ENCODE measurements at regions of chr21 and their contacts with region 1.

Region 1: GRCh38 chr21:26732432-26733221 is 112.6 kb downstream of the ADAMTS1 start:
- DNase-seq: peak; percentile 66
- ATAC-seq: peak; percentile 79
- H3K4me3 Mint-ChIP-seq: no peak overlapping the region
- H3K27ac Mint-ChIP-seq: no peak overlapping the region
- H3K4me1 Mint-ChIP-seq: peaks cover 38% of the 10 kb centered on the region
- H3K27me3 Mint-ChIP-seq: peaks cover 4% of the 10 kb centered on the region; the same call in 1 of the 2 replicates
- CTCF ChIP-seq: peak; percentile 20; the same call in 1 of the 2 replicates

Region 2: GRCh38 chr21:26320596-26320995 is 412.0 kb before region 1 on chr21:
- CTCF ChIA-PET with region 1: no interaction called
- POLR2A ChIA-PET with region 1: no interaction called
- DNase-seq: no peak
- ATAC-seq: no peak
- H3K4me3 Mint-ChIP-seq: no peak overlapping the region
- H3K27ac Mint-ChIP-seq: no peak overlapping the region
- H3K4me1 Mint-ChIP-seq: no peaks in the 10 kb centered on the region
- H3K27me3 Mint-ChIP-seq: no peaks in the 10 kb centered on the region
- CTCF ChIP-seq: no peak

Region 3: DNA sequence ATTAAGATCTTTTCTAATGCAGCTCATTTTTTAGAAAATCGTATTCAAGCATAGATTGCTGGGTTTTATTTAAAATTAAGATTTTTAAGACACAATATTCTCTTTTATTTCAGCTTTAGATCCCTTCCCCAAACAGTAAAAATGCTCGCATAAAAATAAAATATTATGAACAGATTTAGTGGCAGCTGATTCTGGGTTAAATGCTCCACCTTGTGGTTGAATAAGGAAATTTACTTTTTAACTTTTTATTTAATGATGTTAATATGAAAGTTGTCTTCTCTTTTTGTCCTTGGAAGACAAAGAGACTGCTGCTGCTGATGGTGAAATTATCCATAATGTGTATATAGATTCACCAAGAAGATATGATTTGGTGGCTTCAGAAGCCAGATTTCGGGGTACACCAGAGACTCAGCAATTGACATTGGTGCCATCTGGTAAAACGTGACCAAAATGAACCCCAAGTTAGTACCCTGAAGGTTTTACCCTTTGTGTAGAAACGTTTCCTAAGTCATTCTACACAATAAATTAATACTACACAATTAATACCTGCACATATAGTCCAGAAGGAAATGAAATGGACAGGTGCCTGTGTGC is 15.4 kb before region 1 on chr21:
- CTCF ChIA-PET with region 1: interaction called, 10 read pairs
- POLR2A ChIA-PET with region 1: interaction called, 3 read pairs
- DNase-seq: no peak
- ATAC-seq: no peak
- H3K4me3 Mint-ChIP-seq: no peak overlapping the region
- H3K27ac Mint-ChIP-seq: no peak overlapping the region
- H3K4me1 Mint-ChIP-seq: peaks cover 9% of the 10 kb centered on the region
- H3K27me3 Mint-ChIP-seq: peaks cover 3% of the 10 kb centered on the region; the same call in 1 of the 2 replicates
- CTCF ChIP-seq: peak; percentile 69

Region 4: DNA sequence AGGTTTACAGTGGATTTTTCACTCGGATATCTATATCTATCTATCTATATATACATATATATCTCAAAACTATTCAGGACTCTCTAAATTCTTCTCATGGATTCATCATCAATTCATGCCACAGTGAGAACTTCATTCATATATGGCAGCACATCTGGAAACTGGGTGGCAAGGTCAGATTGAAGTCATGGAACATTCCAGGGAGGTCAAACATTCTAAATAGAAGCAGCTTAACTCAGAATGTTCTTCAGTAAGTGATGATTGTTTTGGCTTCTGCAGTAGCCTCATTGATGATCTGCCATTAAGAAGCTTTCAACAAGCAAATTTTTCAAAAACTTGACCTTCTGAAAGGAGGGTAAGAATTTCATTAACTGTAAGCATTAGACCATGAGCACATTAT is 159.5 kb after region 1 on chr21:
- CTCF ChIA-PET with region 1: no interaction called
- POLR2A ChIA-PET with region 1: no interaction called
- DNase-seq: no peak
- ATAC-seq: no peak
- H3K4me3 Mint-ChIP-seq: no peak overlapping the region
- H3K27ac Mint-ChIP-seq: no peak overlapping the region
- H3K4me1 Mint-ChIP-seq: peaks cover 1% of the 10 kb centered on the region
- H3K27me3 Mint-ChIP-seq: no peaks in the 10 kb centered on the region
- CTCF ChIP-seq: no peak